PC-9 (cell line): ENCODE measurements at regions of chr7 and their contacts with region 1.

Region 1: DNA sequence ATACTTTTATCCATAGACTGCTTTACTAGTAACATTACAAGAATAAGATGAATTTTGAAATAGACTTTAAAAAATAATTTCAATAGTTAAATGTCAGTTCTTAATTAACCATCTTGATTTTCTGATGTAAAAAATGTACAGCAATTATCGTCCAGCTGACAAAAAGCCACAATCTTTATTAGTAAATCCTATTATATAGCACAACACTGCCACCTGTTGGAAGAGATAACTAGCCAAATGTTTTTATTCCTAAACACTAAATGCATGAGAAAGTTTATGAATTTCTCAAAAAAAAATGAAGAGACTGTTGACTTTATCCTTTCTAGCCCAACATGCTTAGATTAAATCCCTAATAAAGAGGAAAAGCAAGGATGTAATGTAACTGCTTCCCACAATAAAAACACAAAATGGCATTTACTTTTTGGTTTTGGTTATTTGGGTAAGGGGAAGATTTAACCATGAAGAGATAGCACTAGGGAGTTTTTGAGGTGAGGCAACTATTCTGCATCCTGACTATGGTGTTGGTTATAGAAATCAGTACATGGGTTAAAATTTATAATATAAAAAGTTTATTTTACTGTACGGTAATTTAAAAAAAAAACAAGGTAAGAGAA is 8.0 kb downstream of the COA1 start:
- DNase-seq: peak in 1 of 2 experiments; percentile 44
- H3K4me3 ChIP-seq: no peak overlapping the region
- H3K27ac ChIP-seq: no peak overlapping the region
- H3K4me1 ChIP-seq: peaks cover 26% of the 10 kb centered on the region
- H3K27me3 ChIP-seq: no peaks in the 10 kb centered on the region
- CTCF ChIP-seq: peak; percentile 95

Region 2: DNA sequence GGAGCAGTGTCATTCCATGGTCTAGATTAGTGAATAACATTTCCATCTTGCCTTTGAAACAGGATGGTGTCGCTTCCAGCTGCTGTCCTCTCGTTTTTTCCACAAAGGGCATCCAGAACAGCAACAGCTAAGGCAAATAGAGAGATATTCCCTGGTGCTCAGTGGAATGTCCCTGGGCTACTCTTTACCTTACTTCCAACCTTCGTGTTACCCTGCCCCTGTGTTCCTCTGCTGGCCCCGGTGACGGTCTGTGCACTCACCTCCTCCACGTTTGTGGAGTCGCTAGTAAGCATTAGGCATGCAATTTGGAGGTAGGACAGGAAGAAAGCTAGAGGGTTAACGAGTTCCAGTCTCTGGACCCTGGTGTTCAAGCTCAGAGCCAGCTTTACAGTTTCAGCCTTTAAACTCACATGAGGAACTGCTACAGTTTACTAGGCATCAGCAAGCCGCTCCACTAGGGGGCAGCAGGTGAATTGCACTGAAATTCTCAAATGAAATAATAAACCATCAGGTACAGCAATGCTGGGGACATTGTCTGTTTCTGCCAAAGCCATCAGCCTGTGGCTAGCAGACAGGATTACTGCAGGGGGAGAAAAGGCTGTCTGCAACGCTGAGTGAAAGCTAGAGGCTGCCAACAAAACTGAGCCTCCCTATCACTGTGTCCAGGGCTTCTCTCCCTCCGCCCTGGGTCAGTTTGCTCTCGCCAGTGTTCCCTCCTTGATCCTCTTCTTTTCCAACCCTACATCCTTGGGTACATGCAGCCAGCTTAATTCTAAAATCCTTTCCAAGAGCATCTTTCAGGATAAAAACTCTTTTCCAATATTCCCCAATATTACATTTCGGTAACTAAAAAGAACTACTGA is 780.1 kb before region 1 on chr7:
- CTCF ChIA-PET with region 1: no interaction called
- POLR2A ChIA-PET with region 1: no interaction called
- intact Hi-C with region 1: loop called (anchors 1 kb)
- DNase-seq: peak; percentile 58 to 69
- H3K4me3 ChIP-seq: no peak overlapping the region
- H3K27ac ChIP-seq: no peak overlapping the region
- H3K4me1 ChIP-seq: no peaks in the 10 kb centered on the region
- H3K27me3 ChIP-seq: no peaks in the 10 kb centered on the region
- CTCF ChIP-seq: peak; percentile 98

Region 3: DNA sequence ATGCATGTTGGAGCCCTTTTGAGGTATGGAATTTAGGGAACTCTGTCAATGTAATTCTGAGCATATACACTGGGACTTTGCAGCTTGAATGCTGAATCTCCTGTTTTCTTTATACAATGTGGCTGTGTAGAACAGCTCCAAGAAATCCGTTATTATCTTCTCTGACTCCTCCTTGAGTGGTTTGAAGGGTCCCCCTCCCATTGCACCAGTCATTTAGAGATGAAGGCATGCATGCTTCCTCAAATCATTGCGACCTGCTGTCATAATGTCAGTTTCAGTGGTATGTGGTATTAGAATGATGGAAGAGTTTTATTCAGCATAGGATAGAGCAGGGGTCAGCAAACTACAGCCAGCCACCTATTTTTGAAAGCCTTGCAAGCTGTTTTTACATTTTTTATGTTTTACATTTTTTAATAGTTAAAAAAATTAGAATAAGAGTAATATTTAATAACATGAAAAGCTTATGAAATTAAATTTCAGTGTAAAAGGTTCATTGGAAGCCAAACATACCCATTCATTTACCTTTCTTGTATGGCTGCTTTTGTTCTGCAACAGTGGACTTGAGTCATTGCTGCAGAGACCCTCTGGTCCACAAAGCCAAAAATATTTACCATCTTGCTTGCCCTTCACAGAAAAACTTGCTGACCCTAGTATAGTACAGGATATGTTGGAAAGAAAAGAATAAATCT is 130.3 kb before region 1 on chr7:
- CTCF ChIA-PET with region 1: no interaction called
- POLR2A ChIA-PET with region 1: interaction called, 50 read pairs
- intact Hi-C with region 1: no loop called
- DNase-seq: no peak
- H3K4me3 ChIP-seq: no peak overlapping the region
- H3K27ac ChIP-seq: peak overlapping the region; percentile 25; the same call in 1 of the 2 replicates
- H3K4me1 ChIP-seq: peaks cover 53% of the 10 kb centered on the region
- H3K27me3 ChIP-seq: no peaks in the 10 kb centered on the region
- CTCF ChIP-seq: no peak

Region 4: DNA sequence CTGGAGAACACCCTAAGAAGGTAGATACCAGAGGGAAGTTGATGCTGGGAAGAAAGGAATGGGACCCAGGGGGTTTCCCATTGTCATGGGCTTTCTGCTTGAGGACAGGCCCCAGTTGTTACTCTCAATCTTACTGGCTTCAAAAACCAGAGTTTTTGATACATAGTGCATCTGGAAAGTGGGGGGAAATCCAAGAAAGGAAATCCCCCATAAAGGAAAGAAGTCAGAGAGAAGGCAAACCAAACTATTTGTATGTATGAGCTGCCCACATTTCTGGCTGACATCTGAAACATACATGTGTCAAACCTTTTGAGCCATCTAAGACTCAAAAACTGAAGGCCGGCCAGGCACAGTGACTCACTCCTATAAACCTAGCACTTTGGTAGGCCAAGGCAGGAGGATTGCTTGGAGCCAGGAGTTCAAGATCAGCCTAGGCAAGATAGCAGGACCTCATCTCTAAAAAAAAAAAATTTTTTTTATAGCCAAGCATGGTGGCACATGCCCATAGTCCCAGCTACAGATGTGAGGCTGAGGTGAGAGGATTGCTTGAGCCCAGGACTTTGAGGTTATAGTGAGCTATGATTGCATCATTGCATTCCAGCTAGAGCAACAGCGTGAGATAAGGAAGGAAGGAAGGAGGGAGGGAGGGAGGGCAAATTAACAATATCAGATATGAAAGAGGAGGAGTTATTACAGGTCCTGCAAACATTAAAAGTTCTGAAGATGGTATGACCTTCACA is 14.7 kb after region 1 on chr7:
- CTCF ChIA-PET with region 1: no interaction called
- POLR2A ChIA-PET with region 1: no interaction called
- intact Hi-C with region 1: no loop called
- DNase-seq: no peak
- H3K4me3 ChIP-seq: no peak overlapping the region
- H3K27ac ChIP-seq: no peak overlapping the region
- H3K4me1 ChIP-seq: peaks cover 11% of the 10 kb centered on the region
- H3K27me3 ChIP-seq: no peaks in the 10 kb centered on the region
- CTCF ChIP-seq: no peak

Region 5: DNA sequence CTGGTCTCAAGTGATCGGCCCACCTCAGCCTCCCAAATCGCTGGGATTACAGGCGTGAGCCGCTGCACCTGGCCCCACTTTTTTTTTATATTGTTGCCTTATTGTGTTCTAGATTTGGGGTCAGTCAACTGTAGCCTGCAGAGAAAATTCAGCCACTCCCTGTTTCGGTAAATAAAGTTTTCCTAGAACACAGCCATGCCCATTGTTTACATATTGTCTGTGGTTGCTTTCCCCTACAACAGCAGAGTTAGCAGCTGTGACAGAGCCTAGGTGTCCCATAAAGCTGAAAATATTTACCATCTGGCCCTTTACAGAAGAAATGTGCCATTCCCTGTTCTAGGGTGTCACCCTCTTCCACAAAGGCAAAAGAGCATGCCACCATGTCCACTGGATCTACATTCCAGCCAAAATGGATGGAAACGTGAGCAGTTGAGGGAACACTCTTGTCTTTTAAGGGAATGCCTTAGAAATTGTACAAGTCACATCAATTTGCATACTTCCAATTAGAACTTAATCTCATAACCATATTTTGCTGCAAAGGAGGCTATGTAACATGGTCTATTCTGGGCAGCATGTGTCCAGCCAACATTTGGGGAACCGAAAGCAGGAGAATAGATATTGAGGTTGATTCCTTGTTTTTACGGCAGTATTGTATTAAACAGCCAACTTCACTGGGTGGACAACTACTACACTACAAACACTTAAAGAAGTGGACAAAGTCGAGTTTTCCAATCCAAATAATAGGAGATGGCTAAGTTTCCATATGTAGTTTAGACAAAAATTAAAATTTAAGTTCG is 26.2 kb after region 1 on chr7:
- CTCF ChIA-PET with region 1: no interaction called
- POLR2A ChIA-PET with region 1: no interaction called
- intact Hi-C with region 1: no loop called
- DNase-seq: no peak
- H3K4me3 ChIP-seq: no peak overlapping the region
- H3K27ac ChIP-seq: no peak overlapping the region
- H3K4me1 ChIP-seq: no peaks in the 10 kb centered on the region; the same call in 1 of the 2 replicates
- H3K27me3 ChIP-seq: no peaks in the 10 kb centered on the region
- CTCF ChIP-seq: no peak

Region 6: GRCh38 chr7:43758029-43758821 is 36.9 kb after region 1 on chr7 and contains the start of gene BLVRA:
- CTCF ChIA-PET with region 1: interaction called, 11 read pairs
- POLR2A ChIA-PET with region 1: no interaction called
- intact Hi-C with region 1: no loop called
- DNase-seq: peak; percentile 28 to 69
- H3K4me3 ChIP-seq: peak within 1 kb of the TSS; percentile 85
- H3K27ac ChIP-seq: no peak within 1 kb of the TSS
- H3K4me1 ChIP-seq: peaks cover 78% of the 10 kb centered on the region
- H3K27me3 ChIP-seq: no peaks in the 10 kb centered on the region
- CTCF ChIP-seq: no peak
- total RNA-seq, gene BLVRA: 36.4 and 49.5 TPM in 2 replicates

Region 7: DNA sequence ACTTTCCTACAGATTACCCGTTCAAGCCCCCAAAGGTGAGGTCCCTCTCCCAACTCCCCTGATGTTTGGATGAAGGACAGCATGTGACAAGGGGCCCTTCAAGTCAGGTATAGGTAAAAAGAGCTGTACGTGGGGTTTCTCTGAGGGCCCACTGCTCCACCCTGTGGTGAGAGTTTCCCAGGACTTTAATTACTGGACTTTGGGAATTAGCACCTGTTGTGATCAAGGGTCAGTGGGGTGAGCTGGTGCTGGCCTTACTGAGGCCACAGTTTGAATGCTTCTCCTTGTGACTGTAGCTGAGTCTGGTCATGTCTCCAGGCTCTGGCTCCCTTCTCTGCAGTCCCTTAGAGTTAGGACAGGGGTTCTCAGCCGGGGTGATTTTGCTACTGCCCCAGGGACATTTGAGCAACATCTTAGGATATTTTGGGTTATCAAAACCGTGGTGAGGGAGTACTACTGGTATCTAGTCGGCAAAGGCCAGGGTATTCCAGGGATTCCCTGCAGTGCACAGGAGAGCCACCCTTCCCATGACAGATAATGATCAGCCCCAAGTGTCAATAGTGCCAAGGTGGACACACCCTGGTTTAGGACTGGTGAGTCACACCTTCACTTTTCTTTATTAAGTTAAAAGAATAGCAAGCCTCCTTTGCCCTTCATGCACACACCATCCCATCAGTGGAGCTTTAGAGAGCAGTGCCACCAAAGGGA is 221.9 kb after region 1 on chr7:
- CTCF ChIA-PET with region 1: interaction called, 11 read pairs
- POLR2A ChIA-PET with region 1: no interaction called
- intact Hi-C with region 1: no loop called
- DNase-seq: peak; percentile 55 to 86
- H3K4me3 ChIP-seq: no peak overlapping the region
- H3K27ac ChIP-seq: no peak overlapping the region
- H3K4me1 ChIP-seq: peaks cover 23% of the 10 kb centered on the region
- H3K27me3 ChIP-seq: no peaks in the 10 kb centered on the region
- CTCF ChIP-seq: peak; percentile 68